ENCODE measurements at regions of chr3 and their contacts with region 1.

Region 1: DNA sequence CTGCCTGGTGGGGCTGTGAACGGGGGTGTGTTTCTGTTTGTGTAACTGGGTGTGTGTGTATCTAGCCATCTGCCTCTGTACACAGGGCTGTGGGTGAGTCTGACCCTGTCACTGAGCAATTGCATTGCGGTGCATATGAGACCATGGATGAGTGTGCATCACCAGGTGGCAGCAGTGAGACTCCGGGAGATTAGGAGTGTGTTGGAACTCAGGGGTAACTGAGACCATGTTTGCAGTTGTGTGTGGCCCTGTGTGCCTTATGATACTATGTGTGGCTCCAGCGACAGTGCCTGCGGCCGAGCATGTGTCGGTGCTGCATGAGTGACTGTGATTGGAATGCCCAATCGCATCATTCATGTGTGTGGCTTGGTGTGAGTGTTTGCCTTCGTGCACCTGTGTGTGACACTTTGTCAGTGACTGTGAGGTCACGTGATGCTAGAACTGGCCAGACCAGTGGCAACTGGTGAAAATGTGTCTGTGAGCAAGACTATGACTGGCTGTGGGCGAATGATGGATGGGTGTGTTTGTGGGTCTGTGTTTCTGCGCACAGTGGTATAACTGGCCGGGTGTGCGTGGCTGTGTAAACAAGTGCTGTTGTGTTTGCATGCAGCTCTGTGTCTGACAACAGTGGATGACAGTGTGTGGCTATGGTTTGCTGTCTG is 14.0 kb downstream of the VILL start:
- DNase-seq: peak in 4 of 5 donors; percentile 30 to 74 (median 33)
- H3K4me3 ChIP-seq: no peak overlapping the region
- H3K4me3 Mint-ChIP-seq: peak overlapping the region in 1 of 7 donors; percentile 14
- H3K27ac ChIP-seq: no peak overlapping the region
- H3K27ac Mint-ChIP-seq: peak overlapping the region; percentile 36 to 95 (median 79)
- H3K4me1 ChIP-seq: no peaks in the 10 kb centered on the region
- H3K4me1 Mint-ChIP-seq: peaks cover 18 to 27% (median 25%) of the 10 kb centered on the region in 3 donors
- H3K27me3 ChIP-seq: no peaks in the 10 kb centered on the region
- H3K27me3 Mint-ChIP-seq: peaks cover 0 to 1% of the 10 kb centered on the region in 2 donors

Region 2: DNA sequence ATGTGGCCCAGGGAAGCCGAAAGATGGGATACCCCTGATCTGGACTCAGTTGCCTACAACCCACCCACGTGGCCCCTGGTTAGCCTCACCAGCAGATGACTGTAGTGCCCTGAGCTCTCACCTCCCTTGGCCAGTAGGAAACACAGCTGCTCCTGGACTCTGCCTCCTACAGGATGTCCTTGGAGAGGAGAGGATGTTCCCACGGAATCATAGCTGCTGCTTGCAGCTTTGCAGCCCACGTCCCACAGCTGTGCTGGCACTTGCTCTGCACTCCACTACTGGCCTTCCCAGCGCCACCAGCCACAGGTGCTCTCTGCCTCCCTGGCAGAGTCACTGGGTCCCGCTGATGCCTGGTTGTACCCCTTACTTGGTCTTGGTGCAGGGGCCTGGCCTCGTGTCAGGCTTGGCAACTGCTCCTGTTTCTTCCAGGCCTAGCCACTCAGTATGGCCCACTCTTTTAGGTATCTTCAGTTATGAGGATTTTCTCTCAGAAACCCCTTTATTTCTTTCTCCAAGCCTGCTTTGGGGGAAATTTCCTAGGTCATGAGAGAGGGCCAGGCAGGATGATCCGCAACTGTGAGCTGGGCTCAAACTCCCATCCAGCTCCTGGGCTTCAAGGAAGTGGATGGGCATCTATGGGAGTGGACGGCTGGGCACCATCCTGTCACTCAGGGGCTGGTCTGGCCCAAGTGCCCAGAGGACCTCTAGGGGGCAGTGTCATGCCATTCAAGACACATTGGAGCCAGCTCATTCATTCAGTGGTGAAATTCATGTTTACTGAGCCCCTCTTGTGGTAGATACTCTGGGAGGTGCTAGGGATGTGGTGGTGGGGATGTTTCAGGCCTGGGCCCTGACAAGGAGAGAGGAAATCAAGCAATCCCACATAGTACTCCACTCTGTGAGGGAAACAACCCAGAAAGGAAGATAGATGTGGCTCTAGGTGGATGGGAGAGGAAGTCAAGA is 30.1 kb before region 1 on chr3:
- CTCF ChIA-PET with region 1: interaction called, 65 read pairs
- POLR2A ChIA-PET with region 1: interaction called, 3 read pairs
- DNase-seq: peak; percentile 56 to 80 (median 60)
- H3K4me3 ChIP-seq: no peak overlapping the region
- H3K4me3 Mint-ChIP-seq: no peak overlapping the region
- H3K27ac ChIP-seq: no peak overlapping the region
- H3K27ac Mint-ChIP-seq: peak overlapping the region in 2 of 8 donors; percentile 22 to 52
- H3K4me1 ChIP-seq: no peaks in the 10 kb centered on the region
- H3K4me1 Mint-ChIP-seq: peaks cover 4 to 5% (median 4%) of the 10 kb centered on the region in 3 donors
- H3K27me3 ChIP-seq: no peaks in the 10 kb centered on the region
- H3K27me3 Mint-ChIP-seq: peaks cover 0 to 1% of the 10 kb centered on the region in 2 donors

Region 3: DNA sequence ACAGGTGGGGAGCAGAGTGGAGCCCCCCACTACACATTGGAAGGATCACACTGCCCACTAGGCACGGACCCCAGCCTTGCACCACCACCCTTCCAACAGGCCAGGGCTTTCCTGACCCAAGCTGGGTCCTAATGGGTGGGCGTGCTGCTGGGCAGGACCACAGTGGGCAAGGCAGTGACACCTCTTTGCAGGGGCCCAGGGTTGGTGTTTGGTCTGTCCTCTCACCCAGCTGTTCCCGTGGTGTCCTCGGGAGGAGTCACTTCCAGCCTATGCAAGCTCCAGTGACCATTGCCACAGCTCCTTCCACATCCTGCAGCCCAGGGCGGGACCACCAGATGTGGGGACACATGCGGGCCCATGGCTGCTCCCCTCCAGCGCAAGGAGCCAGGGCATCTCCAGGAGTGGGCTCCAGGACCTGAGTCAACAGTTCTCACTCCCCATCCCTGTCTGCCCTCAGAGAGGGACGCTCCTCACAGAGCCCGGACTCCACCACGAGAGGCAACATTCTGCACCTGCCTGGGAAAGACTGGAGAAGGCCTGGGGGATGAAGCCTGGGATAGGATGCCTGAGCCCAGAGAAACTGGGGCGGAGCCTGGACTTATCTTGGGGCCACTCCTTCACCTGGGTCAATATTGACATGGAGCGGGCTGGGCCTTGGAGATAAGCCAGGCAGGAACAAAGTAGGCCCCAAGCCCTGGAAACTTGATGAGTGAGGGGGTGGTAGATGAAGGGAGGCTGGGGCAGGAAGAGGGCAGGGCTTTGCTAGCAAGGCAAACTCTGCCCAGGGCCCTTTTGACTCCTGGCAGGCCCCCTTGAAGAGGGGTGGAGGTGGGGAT is 17.8 kb before region 1 on chr3:
- CTCF ChIA-PET with region 1: no interaction called
- POLR2A ChIA-PET with region 1: no interaction called
- DNase-seq: no peak
- H3K4me3 ChIP-seq: no peak overlapping the region
- H3K4me3 Mint-ChIP-seq: no peak overlapping the region
- H3K27ac ChIP-seq: peak overlapping the region; percentile 64
- H3K27ac Mint-ChIP-seq: no peak overlapping the region
- H3K4me1 ChIP-seq: no peaks in the 10 kb centered on the region
- H3K4me1 Mint-ChIP-seq: peaks cover 0 to 5% (median 0%) of the 10 kb centered on the region in 3 donors
- H3K27me3 ChIP-seq: no peaks in the 10 kb centered on the region
- H3K27me3 Mint-ChIP-seq: no peaks in the 10 kb centered on the region

Region 4: GRCh38 chr3:38022896-38023709 is 18.6 kb after region 1 on chr3:
- CTCF ChIA-PET with region 1: interaction called, 20 read pairs
- POLR2A ChIA-PET with region 1: interaction called, 3 read pairs
- DNase-seq: peak in 1 of 5 donors; percentile 42
- H3K4me3 ChIP-seq: peak overlapping the region; percentile 88
- H3K4me3 Mint-ChIP-seq: peak overlapping the region; percentile 85 to 96 (median 92)
- H3K27ac ChIP-seq: peak overlapping the region; percentile 82
- H3K27ac Mint-ChIP-seq: peak overlapping the region; percentile 77 to 99 (median 94)
- H3K4me1 ChIP-seq: peaks cover 34% of the 10 kb centered on the region
- H3K4me1 Mint-ChIP-seq: peaks cover 43 to 69% (median 52%) of the 10 kb centered on the region in 3 donors
- H3K27me3 ChIP-seq: no peaks in the 10 kb centered on the region
- H3K27me3 Mint-ChIP-seq: peaks cover 0 to under 1% of the 10 kb centered on the region in 2 donors

Region 5: DNA sequence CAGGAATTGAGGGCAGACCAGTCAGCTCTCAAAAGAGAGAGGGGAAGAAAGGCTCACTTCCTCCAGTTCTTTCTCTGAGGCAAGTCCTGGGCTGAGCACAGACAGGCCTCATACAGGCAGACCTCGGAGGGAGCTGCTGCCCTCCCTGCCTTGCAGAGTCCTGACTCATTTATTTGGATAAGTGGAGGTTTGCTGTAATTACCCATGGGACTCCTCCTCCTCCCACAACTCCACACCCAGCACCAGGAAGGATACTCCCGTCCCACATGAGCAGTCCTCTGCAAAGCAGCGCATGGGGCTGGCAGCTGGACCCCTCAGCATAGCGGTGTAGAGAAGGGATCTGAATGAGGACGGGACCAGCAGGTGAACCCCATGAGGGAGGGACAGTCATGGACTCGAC is 824.9 kb after region 1 on chr3:
- CTCF ChIA-PET with region 1: no interaction called
- POLR2A ChIA-PET with region 1: no interaction called
- DNase-seq: no peak
- H3K4me3 ChIP-seq: no peak overlapping the region
- H3K4me3 Mint-ChIP-seq: no peak overlapping the region
- H3K27ac ChIP-seq: no peak overlapping the region
- H3K27ac Mint-ChIP-seq: no peak overlapping the region
- H3K4me1 ChIP-seq: no peaks in the 10 kb centered on the region
- H3K4me1 Mint-ChIP-seq: peaks cover 4 to 8% (median 6%) of the 10 kb centered on the region in 3 donors
- H3K27me3 ChIP-seq: no peaks in the 10 kb centered on the region
- H3K27me3 Mint-ChIP-seq: peaks cover 5% of the 10 kb centered on the region in 2 donors